GM10248 (cell line): ENCODE measurements at regions of chr7 and their contacts with region 1.

Region 1: DNA sequence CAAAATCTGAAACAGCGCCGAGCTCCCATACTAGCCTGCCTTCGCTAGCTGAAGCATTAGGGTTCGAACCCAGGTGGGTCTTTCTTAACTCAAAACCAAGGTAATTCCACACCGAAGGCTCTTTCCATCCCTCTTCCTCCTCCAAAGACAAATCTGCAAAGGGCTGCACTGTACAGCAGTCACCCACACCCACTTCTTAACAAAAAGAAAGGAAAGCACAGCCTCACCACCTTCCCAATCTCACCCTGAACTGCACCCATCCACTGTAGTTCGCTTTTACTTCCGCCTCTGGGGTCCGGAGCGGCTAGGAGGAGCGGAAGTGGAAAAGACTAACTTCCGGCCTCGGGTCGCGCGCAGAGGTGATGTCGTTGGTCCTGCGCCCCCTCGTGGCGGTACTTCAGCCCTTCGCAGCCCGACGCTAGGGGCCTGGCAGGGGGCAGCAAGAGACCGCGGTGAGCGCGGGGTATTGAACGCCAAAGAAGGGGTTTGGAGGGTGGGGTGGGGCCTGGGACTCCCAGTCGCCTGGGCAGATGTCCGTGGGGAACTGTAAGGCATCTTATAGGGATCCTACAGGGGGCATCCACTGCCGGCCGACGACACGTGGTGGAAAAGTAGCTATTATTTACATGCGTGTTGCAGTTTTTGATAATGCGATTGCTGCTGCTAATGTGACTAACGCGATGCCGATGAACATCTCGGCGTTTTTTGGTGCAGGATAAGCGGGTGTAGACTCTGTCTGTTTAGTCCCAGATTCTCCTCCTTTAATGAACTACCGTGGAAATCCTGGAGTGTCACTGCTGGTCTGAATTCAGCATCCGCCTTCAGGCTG is at the start of gene MTERF1:
- DNase-seq: peak; percentile 90
- CTCF ChIP-seq: peak; percentile 100

Region 2: GRCh38 chr7:91835846-91836368 is 44.7 kb before region 1 on chr7:
- CTCF ChIA-PET with region 1: interaction called, 21 read pairs
- POLR2A ChIA-PET with region 1: no interaction called
- DNase-seq: no peak
- CTCF ChIP-seq: no peak

Region 3: DNA sequence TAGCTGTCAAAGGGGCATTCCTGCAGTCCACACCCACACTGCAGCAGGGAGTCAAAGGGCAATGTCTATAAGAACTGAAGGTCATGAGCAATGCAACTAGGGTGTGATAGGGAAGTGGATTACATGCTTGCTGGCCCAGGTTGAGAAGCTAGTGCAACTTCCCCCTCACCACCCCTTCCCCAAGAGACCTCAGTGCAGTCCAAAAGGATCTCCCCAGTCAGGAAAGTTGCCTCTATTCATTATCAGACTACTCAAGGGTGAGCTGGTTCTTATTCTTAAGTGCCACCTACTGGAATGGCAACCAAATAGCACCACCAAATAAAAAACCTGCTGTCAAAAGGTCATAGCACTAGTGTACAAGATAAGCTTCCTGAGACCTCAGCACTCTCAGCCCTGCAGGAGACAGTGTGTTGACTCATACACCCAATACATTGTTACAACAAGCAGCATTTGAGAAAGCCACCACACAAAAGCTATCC is 28.3 kb before region 1 on chr7:
- CTCF ChIA-PET with region 1: interaction called, 10 read pairs
- POLR2A ChIA-PET with region 1: no interaction called
- DNase-seq: peak; percentile 11
- CTCF ChIP-seq: peak; percentile 16

Region 4: DNA sequence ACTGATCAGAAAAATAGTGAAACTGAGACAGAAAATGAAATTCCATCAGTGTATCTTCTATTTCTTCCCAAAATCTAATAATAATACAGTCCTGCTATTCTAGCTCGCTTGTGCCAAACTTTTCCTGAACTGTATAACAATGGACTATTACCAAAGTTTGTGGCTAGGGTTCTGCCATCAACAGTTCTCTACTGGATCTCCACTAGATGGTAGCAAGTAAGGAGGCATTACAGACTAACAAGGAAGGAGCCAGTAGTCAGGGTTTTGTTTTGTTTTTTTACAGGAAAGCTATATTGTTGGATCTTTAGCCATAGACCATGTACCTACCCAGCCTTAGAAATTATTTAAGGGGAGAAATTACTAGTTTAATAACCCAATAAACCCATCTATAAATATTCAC is 11.0 kb before region 1 on chr7:
- CTCF ChIA-PET with region 1: interaction called, 21 read pairs
- POLR2A ChIA-PET with region 1: no interaction called
- DNase-seq: no peak
- CTCF ChIP-seq: no peak

Region 5: DNA sequence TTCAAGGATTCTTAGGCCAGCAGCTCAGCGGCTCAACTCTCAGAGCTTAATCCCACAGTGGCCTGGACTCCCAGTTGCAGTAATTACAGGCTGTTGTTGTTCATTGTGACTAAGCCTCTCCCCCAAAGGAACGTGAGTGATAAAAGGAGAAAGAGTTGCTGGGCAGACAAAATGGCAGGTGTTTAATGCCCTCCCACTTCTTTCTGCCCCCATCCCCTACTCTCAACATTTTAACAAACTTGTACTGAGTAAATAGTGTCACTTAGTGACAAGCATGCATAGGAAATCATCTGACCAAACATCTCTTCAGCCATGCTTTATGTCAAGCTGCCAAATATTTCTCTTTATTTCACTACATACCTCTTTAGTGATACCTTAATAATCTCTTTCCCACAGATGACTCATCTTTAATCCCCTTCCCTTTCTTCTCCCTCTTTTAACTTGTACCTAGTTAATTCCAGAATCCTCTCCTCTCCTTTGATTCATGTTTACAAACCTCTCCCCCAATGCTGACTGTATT is 12.3 kb after region 1 on chr7:
- CTCF ChIA-PET with region 1: interaction called, 21 read pairs
- POLR2A ChIA-PET with region 1: no interaction called
- DNase-seq: no peak
- CTCF ChIP-seq: no peak

Region 6: GRCh38 chr7:91940572-91941341 is 60.1 kb after region 1 on chr7 and contains the start of gene AKAP9:
- CTCF ChIA-PET with region 1: interaction called, 17 read pairs
- POLR2A ChIA-PET with region 1: no interaction called
- DNase-seq: peak; percentile 92
- CTCF ChIP-seq: peak; percentile 5